Right cardiac atrium (tissue), 5 donors: ENCODE measurements at regions of chr14 and their contacts with region 1.

Region 1: DNA sequence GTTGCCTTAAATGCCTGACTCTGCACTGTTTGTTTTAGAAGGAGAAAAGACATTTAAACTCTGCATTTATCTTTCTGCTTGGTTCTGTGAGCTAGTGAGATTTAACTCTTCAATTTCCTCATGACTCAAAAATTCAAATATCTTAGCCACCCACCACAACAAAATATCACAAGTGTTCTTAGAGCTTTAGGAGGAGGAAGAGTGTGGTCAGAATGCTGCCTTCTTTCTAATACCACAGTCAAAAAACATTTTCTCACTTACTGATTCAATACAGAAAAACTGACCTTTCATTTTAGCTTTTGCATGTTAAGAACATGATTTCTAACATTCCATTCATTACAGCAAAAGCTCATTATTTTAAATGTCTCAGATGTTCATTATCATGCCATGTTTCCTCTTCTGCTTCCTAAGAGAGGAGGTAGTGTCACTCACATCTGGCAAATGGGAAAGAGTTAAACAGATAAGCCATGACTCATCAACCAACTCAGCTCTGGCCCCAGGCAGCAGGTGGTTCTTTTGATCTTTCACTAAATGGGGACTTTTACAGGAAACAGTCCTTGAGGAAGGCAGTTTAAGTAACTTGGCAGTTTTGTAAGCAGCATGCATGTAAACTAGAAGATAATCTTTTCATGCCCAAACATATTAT is 56.4 kb upstream of the RNU6-8 start:
- DNase-seq: no peak
- ATAC-seq: no peak
- H3K4me3 ChIP-seq: no peak overlapping the region
- H3K27ac ChIP-seq: no peak overlapping the region
- H3K4me1 ChIP-seq: peaks cover 9% of the 10 kb centered on the region
- H3K27me3 ChIP-seq: no peaks in the 10 kb centered on the region

Region 2: GRCh38 chr14:32397861-32398640 is 138.6 kb after region 1 on chr14:
- intact Hi-C with region 1: no loop called
- DNase-seq: no peak
- ATAC-seq: no peak
- H3K4me3 ChIP-seq: no peak overlapping the region
- H3K27ac ChIP-seq: no peak overlapping the region
- H3K4me1 ChIP-seq: no peaks in the 10 kb centered on the region
- H3K27me3 ChIP-seq: no peaks in the 10 kb centered on the region

Region 3: GRCh38 chr14:32559595-32559994 is 300.1 kb after region 1 on chr14:
- intact Hi-C with region 1: loop called in 1 of 4 experiments (anchors 10 kb)
- DNase-seq: no peak
- ATAC-seq: peak; percentile 37 to 49
- H3K4me3 ChIP-seq: no peak overlapping the region
- H3K27ac ChIP-seq: no peak overlapping the region
- H3K4me1 ChIP-seq: no peaks in the 10 kb centered on the region
- H3K27me3 ChIP-seq: no peaks in the 10 kb centered on the region